Activated CD8-positive, alpha-beta memory T cell treated with anti-CD3 and anti-CD28 coated beads, Interleukin-2, amount 10 ng/mL, durations not matched to agents 7 days and 5 days (primary cell): ENCODE measurements at regions of chr4 and their contacts with region 1.

Region 1: GRCh38 chr4:78951862-78952472 is 12.7 kb upstream of the PAQR3 start:
- DNase-seq: no peak
- ATAC-seq: peak; percentile 45
- H3K4me3 Mint-ChIP-seq: no peak overlapping the region
- H3K27ac Mint-ChIP-seq: no peak overlapping the region
- H3K4me1 Mint-ChIP-seq: peaks cover 2% of the 10 kb centered on the region
- H3K27me3 Mint-ChIP-seq: peaks cover 21% of the 10 kb centered on the region

Region 2: DNA sequence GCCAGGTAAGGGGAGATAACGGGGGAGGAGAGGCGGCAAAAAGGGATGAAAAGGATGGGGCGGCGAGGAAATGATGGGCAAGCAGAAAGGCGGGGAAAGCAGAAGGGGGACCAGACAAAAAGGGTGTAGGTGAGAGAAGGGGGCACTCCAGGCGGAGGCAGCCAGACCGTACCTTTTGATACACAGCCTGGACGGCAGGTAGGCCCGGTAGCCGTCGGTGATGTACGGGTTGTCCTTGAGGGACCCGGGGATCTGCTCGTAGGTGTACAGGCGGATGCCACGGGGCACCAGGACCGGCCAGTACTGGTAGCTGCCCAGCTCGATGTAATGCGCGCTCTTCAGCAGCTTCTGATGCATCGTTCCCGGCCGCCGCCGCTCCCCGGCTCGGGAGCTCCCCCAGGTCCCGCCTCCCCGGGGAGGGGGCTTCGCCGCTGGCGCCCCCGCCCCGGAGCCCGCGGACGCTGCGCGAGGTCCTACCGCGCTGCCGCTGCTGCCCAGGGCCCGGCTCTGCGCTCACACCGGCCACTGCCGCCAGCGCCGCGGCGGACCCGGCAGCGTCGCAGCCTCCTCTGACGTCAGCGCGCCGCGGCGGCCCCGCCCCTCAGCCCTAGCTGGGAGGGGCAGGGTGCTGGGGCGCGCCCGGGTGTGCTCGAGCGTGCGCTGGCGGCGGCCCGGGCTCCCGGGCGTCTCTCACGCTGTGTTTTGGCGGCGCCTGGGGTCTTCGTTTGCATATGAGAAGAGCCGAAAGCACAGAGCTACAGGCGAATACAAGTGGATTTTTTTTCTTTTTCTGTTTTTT is 12.9 kb before region 1 on chr4 and contains the start of gene PAQR3:
- CTCF ChIA-PET with region 1: interaction called, 10 read pairs
- DNase-seq: peak; percentile 86
- ATAC-seq: peak; percentile 98
- H3K4me3 Mint-ChIP-seq: peak within 1 kb of the TSS; percentile 99
- H3K27ac Mint-ChIP-seq: peak within 1 kb of the TSS; percentile 88
- H3K4me1 Mint-ChIP-seq: peaks cover 34% of the 10 kb centered on the region
- H3K27me3 Mint-ChIP-seq: peaks cover 18% of the 10 kb centered on the region
- total RNA-seq, gene PAQR3: 13.3 to 15.7 TPM

Region 3: DNA sequence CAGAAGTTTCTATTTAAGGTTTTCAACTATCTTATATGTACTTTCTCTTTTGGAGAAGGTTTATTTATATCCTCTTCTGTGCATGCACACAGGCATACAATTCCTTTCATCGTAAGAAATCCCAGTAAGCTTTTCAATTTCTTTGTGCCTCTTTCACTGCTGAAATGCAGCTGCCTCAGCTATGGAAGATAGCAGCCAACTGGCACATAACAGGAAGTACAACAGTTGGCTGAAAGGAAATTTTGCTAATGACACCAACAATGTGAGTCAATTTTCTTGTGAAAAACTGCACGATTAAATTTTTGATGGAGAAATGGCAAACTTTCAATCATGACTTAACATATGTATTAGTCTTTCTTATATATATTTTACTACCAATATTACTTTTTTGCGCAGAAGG is 61.8 kb after region 1 on chr4:
- CTCF ChIA-PET with region 1: no interaction called
- DNase-seq: no peak
- ATAC-seq: no peak
- H3K4me3 Mint-ChIP-seq: no peak overlapping the region
- H3K27ac Mint-ChIP-seq: no peak overlapping the region
- H3K4me1 Mint-ChIP-seq: no peaks in the 10 kb centered on the region
- H3K27me3 Mint-ChIP-seq: peaks cover 5% of the 10 kb centered on the region

Region 4: GRCh38 chr4:79257953-79258613 is 306.1 kb after region 1 on chr4:
- CTCF ChIA-PET with region 1: no interaction called
- DNase-seq: no peak
- ATAC-seq: no peak
- H3K4me3 Mint-ChIP-seq: no peak overlapping the region
- H3K27ac Mint-ChIP-seq: no peak overlapping the region
- H3K4me1 Mint-ChIP-seq: no peaks in the 10 kb centered on the region
- H3K27me3 Mint-ChIP-seq: no peaks in the 10 kb centered on the region